ENCODE measurements at regions of chr6 and their contacts with region 1.

Region 1: DNA sequence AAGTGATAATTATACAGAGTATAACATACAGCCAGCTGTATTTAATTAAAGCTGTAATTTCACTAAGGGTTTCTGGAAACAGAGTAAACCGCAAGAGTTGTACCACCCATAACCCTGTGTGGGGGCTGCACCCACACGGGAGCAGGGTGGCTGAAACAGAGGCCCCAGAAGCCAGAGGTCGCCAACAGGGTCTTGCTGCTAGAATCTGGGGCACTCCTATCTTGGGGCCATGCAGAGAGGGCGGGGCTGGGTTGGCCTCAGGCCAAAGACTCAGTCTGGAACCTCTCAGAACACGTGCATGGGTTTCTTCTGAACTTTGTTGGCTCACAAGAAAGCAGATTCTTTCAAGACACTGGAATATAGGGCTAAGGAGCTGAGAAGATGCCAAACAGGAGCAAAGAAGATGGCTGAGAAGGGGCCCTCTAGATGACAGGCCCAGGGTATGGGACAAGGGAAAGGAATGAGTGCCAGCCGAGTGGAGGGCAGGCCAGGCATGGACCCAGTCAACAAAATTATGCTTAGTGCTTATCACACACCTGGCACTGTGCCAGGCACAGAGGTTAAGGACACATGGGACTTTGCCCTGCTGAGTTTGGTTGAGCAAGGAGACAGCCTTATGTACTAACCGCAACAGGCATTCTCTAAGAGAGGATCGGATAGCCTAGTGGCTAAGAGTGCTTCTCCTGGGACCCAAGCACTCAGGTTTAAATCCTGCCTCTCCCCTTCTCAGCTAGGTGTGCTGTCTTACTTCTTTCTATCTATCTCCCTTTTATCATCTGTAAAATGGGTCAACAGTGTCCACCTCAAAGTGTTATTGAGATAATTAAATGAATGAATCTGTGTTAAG is 96.6 kb upstream of the FOXP4 start:
- DNase-seq: peak in 1 of 14 experiments; percentile 27
- ATAC-seq: no peak
- H3K4me3 ChIP-seq: no peak overlapping the region
- H3K4me3 Mint-ChIP-seq: no peak overlapping the region
- H3K27ac ChIP-seq: no peak overlapping the region
- H3K27ac Mint-ChIP-seq: no peak overlapping the region
- H3K4me1 ChIP-seq: peaks cover 8% of the 10 kb centered on the region
- H3K4me1 Mint-ChIP-seq: peaks cover 8% of the 10 kb centered on the region
- H3K27me3 ChIP-seq: peaks cover 1 to 2% of the 10 kb centered on the region in 2 experiments
- H3K27me3 Mint-ChIP-seq: peaks cover 3% of the 10 kb centered on the region
- CTCF ChIP-seq: no peak

Region 2: DNA sequence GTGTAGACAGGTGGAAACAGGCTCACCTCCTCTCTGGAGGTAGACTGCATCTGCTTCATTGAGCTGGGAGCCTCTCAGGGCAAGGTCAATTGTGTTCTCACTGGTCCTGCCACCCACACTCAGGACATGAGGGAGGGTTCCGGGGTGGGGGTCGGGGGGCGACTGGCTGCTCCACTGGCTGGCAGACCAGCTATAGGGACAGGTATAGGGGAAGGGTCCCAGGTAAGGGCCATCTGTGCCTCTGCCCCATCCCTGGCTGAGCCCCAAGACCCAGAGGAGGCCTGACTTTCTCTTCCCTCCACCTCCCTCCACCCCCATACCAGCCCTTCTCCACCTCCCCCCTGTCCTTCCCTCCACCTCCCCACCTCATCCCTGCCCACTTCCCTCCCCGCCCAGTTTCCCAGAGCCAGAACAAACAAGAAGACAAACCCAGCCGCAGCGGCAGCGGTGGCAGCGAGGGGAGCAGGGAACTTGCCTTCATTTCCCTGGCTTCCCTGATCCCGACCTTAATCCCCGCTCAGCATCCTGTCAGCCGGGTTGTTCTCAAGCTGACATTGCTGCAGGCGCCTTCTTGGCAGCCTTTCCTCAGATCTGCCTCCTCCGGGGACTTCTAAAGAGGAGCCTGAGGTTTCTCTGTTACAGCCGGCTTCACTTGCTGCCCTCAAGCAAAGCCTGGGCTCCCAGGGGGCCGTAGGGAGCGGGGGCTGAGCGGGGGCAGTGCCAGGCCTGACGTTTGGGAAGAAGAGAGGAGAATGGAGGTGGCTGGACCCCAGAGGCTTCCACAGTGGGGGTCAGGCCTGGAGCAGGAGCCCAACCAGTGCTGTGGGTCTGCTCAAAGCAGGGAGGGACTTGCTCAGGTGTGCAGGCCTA is 78.3 kb after region 1 on chr6:
- CTCF ChIA-PET with region 1: no interaction called
- POLR2A ChIA-PET with region 1: no interaction called
- intact Hi-C with region 1: loop called in 1 of 2 experiments (anchors 5 kb)
- DNase-seq: no peak
- ATAC-seq: no peak
- H3K4me3 ChIP-seq: no peak overlapping the region
- H3K4me3 Mint-ChIP-seq: no peak overlapping the region
- H3K27ac ChIP-seq: no peak overlapping the region
- H3K27ac Mint-ChIP-seq: no peak overlapping the region
- H3K4me1 ChIP-seq: peaks cover 24% of the 10 kb centered on the region
- H3K4me1 Mint-ChIP-seq: peaks cover 20% of the 10 kb centered on the region
- H3K27me3 ChIP-seq: peaks cover 5 to 7% of the 10 kb centered on the region in 2 experiments
- H3K27me3 Mint-ChIP-seq: peaks cover 15% of the 10 kb centered on the region
- CTCF ChIP-seq: no peak

Region 3: GRCh38 chr6:42050266-42051032 is 600.8 kb after region 1 on chr6 and contains the start of gene TAF8:
- CTCF ChIA-PET with region 1: no interaction called
- POLR2A ChIA-PET with region 1: no interaction called
- intact Hi-C with region 1: no loop called
- DNase-seq: peak; percentile 78 to 95 (median 84)
- ATAC-seq: peak; percentile 53
- H3K4me3 ChIP-seq: peak within 1 kb of the TSS; percentile 85
- H3K4me3 Mint-ChIP-seq: peak within 1 kb of the TSS; percentile 96
- H3K27ac ChIP-seq: peak within 1 kb of the TSS; percentile 85 to 89
- H3K27ac Mint-ChIP-seq: peak within 1 kb of the TSS; percentile 89
- H3K4me1 ChIP-seq: peaks cover 61% of the 10 kb centered on the region
- H3K4me1 Mint-ChIP-seq: peaks cover 72% of the 10 kb centered on the region
- H3K27me3 ChIP-seq: no peaks in the 10 kb centered on the region
- H3K27me3 Mint-ChIP-seq: no peaks in the 10 kb centered on the region
- CTCF ChIP-seq: no peak
- total RNA-seq, gene TAF8: 30.1 to 34.7 TPM

Measured in CD4-positive, alpha-beta T cell (primary cell).